MCF 10A (cell line): ENCODE measurements at regions of chr1 and their contacts with region 1.

Region 1: DNA sequence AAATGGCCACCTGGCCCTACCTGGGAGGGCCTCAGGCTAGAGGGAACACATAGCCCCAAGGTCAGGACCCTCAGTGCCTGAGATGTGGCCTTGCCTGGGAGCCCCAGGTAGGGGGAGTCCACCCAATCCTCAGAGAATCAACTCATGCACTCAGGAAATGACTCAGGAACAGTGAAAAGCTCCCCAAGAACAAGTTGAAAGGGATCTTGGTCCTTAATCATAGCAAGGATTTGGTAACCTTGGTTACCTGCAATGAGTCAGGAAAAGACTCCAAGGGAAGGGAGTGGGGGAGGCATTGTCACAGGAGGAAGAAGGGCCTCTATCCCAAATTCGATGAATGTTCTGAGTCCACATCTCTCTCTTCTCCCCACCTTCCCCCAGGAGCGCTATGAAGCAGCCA is 17.0 kb downstream of the MAP7D1 start:
- DNase-seq: peak; percentile 89
- H3K4me3 Mint-ChIP-seq: no peak overlapping the region
- H3K27ac Mint-ChIP-seq: peak overlapping the region; percentile 94
- H3K4me1 Mint-ChIP-seq: peaks cover 26% of the 10 kb centered on the region
- H3K27me3 Mint-ChIP-seq: no peaks in the 10 kb centered on the region
- CTCF ChIP-seq: no peak

Region 2: DNA sequence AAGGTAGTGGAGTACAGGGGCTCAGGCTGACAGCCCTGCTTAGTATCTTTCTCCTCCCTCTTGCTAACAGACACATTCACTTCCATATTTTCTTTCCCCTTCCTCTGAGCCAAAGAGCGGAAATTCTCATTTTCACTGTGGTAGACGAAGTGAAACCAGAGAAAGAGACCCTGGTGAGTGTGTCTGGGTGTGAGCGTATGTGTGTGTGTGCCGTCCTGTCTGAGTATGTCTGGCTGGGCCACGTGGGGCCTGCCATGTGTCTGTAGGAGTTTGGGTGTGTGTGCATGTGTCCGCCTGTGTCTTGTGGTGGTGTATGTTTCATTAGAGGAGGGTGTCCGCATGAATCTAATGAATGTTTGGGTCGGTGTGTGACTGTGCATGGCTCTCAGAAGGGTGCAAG is 49.6 kb before region 1 on chr1:
- CTCF ChIA-PET with region 1: no interaction called
- POLR2A ChIA-PET with region 1: no interaction called
- intact Hi-C with region 1: no loop called
- DNase-seq: no peak
- H3K4me3 Mint-ChIP-seq: no peak overlapping the region
- H3K27ac Mint-ChIP-seq: no peak overlapping the region
- H3K4me1 Mint-ChIP-seq: no peaks in the 10 kb centered on the region
- H3K27me3 Mint-ChIP-seq: peaks cover 21% of the 10 kb centered on the region
- CTCF ChIP-seq: no peak

Region 3: DNA sequence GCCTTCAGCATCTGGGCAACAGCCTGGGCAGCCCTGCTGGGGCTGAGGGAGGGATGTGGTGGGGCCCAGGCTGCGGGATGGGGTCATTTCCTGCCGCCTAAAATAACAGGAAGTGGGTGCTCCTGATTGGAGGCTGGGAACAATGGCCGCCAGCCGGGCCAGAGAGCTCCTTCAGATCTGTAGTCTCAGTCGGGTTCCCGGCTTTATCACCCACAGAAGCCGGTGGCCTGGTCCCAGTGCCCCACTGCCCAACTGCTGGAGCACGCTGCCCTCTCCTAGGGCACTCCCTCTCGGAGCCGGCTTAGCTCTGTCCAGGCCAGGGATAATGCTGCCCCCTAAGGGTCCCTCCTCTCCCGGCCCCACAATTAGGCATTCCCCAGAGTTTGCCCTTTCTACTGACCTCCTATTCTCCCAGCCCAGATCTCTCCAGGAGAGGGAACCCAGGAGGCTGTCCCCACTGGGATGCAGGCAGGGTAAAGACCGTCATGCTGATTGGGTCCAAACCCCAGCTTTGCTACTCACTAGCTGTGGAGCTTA is 12.0 kb before region 1 on chr1:
- CTCF ChIA-PET with region 1: interaction called, 9 read pairs
- POLR2A ChIA-PET with region 1: interaction called, 13 read pairs
- intact Hi-C with region 1: no loop called
- DNase-seq: peak; percentile 59
- H3K4me3 Mint-ChIP-seq: peak overlapping the region; percentile 66
- H3K27ac Mint-ChIP-seq: peak overlapping the region; percentile 94
- H3K4me1 Mint-ChIP-seq: peaks cover 61% of the 10 kb centered on the region
- H3K27me3 Mint-ChIP-seq: no peaks in the 10 kb centered on the region
- CTCF ChIP-seq: peak; percentile 40